ENCODE measurements at regions of chr15 and their contacts with region 1.

Region 1: GRCh38 chr15:93087825-93088199 is 1.2 kb downstream of the RGMA start:
- DNase-seq: peak; percentile 63 to 79 (median 71)
- ATAC-seq: peak; percentile 46 to 73 (median 69)
- H3K4me3 ChIP-seq: peak overlapping the region; percentile 42 to 81 (median 63)
- H3K27ac ChIP-seq: peak overlapping the region; percentile 63 to 86 (median 78)
- H3K4me1 ChIP-seq: peaks cover 0 to 29% (median 12%) of the 10 kb centered on the region in 12 donors
- H3K27me3 ChIP-seq: peaks cover 0 to 66% (median 6%) of the 10 kb centered on the region in 9 donors
- CTCF ChIP-seq: peak; percentile 84 to 95 (median 91)
- POLR2A ChIP-seq: no peak

Region 2: GRCh38 chr15:93030430-93031105 is 57.2 kb before region 1 on chr15:
- intact Hi-C with region 1: loop called in 4 of 10 experiments (anchors 5 kb)
- DNase-seq: peak in 4 of 5 donors; percentile 67 to 75 (median 68)
- ATAC-seq: peak; percentile 34 to 72 (median 63)
- H3K4me3 ChIP-seq: no peak overlapping the region
- H3K27ac ChIP-seq: peak overlapping the region in 10 of 12 donors; percentile 25 to 96 (median 83)
- H3K4me1 ChIP-seq: peaks cover 0 to 55% (median 44%) of the 10 kb centered on the region in 12 donors
- H3K27me3 ChIP-seq: no peaks in the 10 kb centered on the region
- CTCF ChIP-seq: peak; percentile 79 to 92 (median 86)
- POLR2A ChIP-seq: no peak

Region 3: GRCh38 chr15:93152951-93153350 is 65.1 kb after region 1 on chr15:
- intact Hi-C with region 1: loop called in 1 of 10 experiments (anchors 5 kb)
- DNase-seq: peak; percentile 71 to 85 (median 77)
- ATAC-seq: peak; percentile 87 to 95 (median 92)
- H3K4me3 ChIP-seq: no peak overlapping the region
- H3K27ac ChIP-seq: peak overlapping the region in 2 of 12 donors; percentile 13 to 48
- H3K4me1 ChIP-seq: peaks cover 0 to 32% (median 16%) of the 10 kb centered on the region in 12 donors
- H3K27me3 ChIP-seq: no peaks in the 10 kb centered on the region
- CTCF ChIP-seq: no peak
- POLR2A ChIP-seq: no peak

Region 4: DNA sequence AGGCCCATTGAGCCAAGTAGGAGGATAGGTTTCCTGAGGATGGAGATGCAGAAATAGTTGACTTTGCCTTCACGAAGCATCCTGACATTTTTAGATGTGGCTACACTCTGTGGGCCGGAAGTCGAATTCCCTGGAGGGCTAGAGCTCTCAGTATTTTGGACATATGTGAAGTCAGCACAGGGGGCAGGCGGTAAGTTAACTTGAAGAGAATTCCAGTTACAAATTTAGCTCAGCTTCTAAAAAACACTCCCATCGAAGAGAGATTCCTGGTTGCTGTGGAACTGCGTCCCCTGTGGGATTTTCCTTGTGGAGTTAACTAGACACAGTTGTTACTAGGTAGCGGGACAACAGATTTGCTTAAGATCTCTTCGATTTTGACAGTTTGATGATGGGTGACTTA is 163.1 kb after region 1 on chr15:
- intact Hi-C with region 1: loop called in 2 of 10 experiments (anchors 5 kb)
- DNase-seq: peak in 4 of 5 donors; percentile 62 to 74 (median 70)
- ATAC-seq: peak; percentile 35 to 81 (median 68)
- H3K4me3 ChIP-seq: no peak overlapping the region
- H3K27ac ChIP-seq: peak overlapping the region in 7 of 12 donors; percentile 13 to 65 (median 43)
- H3K4me1 ChIP-seq: peaks cover 0 to 44% (median 10%) of the 10 kb centered on the region in 12 donors
- H3K27me3 ChIP-seq: no peaks in the 10 kb centered on the region
- CTCF ChIP-seq: peak in 2 of 12 donors; percentile 16 to 42
- POLR2A ChIP-seq: no peak

Region 5: GRCh38 chr15:93331545-93332167 is 243.8 kb after region 1 on chr15:
- intact Hi-C with region 1: loop called in 6 of 10 experiments (anchors 2 to 10 kb)
- DNase-seq: no peak
- ATAC-seq: no peak
- H3K4me3 ChIP-seq: no peak overlapping the region
- H3K27ac ChIP-seq: peak overlapping the region in 1 of 12 donors; percentile 32
- H3K4me1 ChIP-seq: peaks cover 0 to 3% (median 0%) of the 10 kb centered on the region in 12 donors
- H3K27me3 ChIP-seq: peaks cover 0 to 45% (median 11%) of the 10 kb centered on the region in 9 donors
- CTCF ChIP-seq: no peak
- POLR2A ChIP-seq: no peak

Region 6: GRCh38 chr15:93617443-93617842 is 529.6 kb after region 1 on chr15:
- intact Hi-C with region 1: loop called in 5 of 10 experiments (anchors 5 to 10 kb)
- DNase-seq: peak in 2 of 5 donors; percentile 18 to 30
- ATAC-seq: peak in 2 of 4 donors; percentile 27 to 61
- H3K4me3 ChIP-seq: no peak overlapping the region
- H3K27ac ChIP-seq: no peak overlapping the region
- H3K4me1 ChIP-seq: peaks cover 0 to 13% (median 0%) of the 10 kb centered on the region in 12 donors
- H3K27me3 ChIP-seq: peaks cover 0 to 5% (median 0%) of the 10 kb centered on the region in 9 donors
- CTCF ChIP-seq: peak in 3 of 12 donors; percentile 9 to 18 (median 10)
- POLR2A ChIP-seq: no peak

Region 7: DNA sequence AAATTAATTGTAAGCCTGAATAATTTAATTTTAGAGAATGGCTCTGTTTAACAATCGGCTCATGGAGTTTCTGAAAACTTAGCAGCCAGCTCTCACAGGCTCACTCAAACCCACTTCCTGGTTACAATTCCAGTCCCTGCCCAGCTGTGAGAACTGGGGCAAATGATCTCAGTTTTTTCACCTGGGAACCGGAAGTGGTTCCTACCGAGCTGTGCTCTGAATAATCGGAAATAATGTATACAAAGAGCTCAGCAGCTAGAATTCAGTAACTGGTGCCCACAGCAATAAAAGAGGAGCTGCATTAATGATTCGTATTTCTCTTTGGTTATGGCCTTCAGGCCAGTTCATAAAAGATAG is 899.3 kb after region 1 on chr15:
- intact Hi-C with region 1: loop called in 1 of 10 experiments (anchors 10 kb)
- DNase-seq: no peak
- ATAC-seq: no peak
- H3K4me3 ChIP-seq: no peak overlapping the region
- H3K27ac ChIP-seq: peak overlapping the region in 1 of 12 donors; percentile 20
- H3K4me1 ChIP-seq: peaks cover 0 to 25% (median 3%) of the 10 kb centered on the region in 12 donors
- H3K27me3 ChIP-seq: no peaks in the 10 kb centered on the region
- CTCF ChIP-seq: no peak
- POLR2A ChIP-seq: no peak

Measured in heart left ventricle (tissue), 16 donors.